ENCODE measurements at regions of chr2 and their contacts with region 1.

Region 1: GRCh38 chr2:58896638-58897037 is 655.5 kb upstream of the FANCL start:
- DNase-seq: no peak
- ATAC-seq: no peak
- H3K4me3 ChIP-seq: no peak overlapping the region
- H3K27ac ChIP-seq: no peak overlapping the region
- H3K4me1 ChIP-seq: peaks cover 0 to 16% (median 0%) of the 10 kb centered on the region in 9 donors
- H3K27me3 ChIP-seq: peaks cover 0 to 8% (median 0%) of the 10 kb centered on the region in 7 donors
- CTCF ChIP-seq: no peak

Region 2: DNA sequence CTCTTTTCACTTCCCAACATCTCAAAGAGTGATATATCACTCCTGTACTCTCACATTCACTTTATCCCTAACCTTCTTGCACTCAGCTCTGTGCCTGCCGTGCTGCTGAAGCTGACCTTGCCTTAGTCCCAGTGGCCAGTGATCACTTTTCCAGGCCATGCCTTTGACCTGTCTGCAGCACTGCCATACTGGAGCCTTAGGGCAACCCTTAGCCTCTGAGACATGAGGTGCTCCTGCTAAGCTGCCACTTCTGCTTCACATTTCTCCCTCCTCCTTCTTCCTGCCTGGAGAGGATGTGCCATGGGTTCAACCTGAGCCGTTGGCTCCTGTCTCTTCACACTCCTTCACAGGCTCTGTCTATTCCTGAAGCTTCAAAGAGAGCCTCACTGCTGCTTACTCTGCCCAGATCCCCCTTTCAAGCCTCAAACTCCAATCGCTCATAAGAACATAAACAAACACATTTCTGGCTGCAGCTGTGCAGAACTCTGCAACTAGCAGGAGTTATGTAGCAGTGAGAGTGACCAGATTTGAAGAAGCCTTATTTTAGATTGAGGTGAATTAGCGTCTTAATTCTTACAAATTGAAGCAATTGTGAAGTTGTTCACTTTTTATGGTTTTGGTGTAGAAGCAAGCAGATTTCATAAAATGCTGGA is 60.7 kb after region 1 on chr2:
- intact Hi-C with region 1: loop called in 1 of 10 experiments (anchors 10 kb)
- DNase-seq: no peak
- ATAC-seq: no peak
- H3K4me3 ChIP-seq: no peak overlapping the region
- H3K27ac ChIP-seq: no peak overlapping the region
- H3K4me1 ChIP-seq: peaks cover 0 to 6% (median 0%) of the 10 kb centered on the region in 9 donors
- H3K27me3 ChIP-seq: no peaks in the 10 kb centered on the region
- CTCF ChIP-seq: no peak

Region 3: GRCh38 chr2:59034837-59035236 is 138.2 kb after region 1 on chr2:
- intact Hi-C with region 1: no loop called
- DNase-seq: no peak
- ATAC-seq: no peak
- H3K4me3 ChIP-seq: no peak overlapping the region
- H3K27ac ChIP-seq: no peak overlapping the region
- H3K4me1 ChIP-seq: no peaks in the 10 kb centered on the region
- H3K27me3 ChIP-seq: no peaks in the 10 kb centered on the region
- CTCF ChIP-seq: no peak

Measured in heart right ventricle (tissue), 16 donors.